Head of caudate nucleus (tissue), 42 donors: ENCODE measurements at regions of chr3 and their contacts with region 1.

Region 1: DNA sequence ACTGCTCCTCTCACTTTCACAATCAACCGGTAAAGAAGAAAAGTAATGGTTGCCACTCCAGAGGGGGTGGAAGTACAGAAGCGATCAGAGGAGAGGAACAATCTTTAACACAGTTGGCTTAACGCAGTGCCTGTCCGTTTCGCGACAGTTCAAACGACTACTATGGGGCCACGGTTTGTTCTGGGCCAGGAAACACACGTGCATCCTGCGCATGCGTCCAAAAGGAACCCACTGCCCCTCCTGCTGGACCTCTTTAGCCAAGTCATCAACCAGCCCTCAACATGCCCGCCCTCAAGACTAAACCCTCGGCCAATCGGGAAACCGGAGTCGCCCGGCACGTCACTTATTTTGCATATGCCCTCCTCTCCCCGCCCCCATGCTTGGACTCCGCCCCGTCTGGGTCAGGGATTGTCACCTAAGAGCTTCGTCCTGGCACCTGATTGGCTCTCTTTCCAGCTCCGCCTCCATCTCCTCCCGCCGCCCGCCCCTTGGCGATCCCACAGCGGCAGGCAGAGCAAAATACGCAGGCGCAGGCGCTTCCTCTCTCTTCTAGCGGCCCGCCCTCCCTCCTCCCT is 345 bp upstream of the CDV3 start:
- DNase-seq: peak; percentile 99 to 100 (median 100)

Region 2: DNA sequence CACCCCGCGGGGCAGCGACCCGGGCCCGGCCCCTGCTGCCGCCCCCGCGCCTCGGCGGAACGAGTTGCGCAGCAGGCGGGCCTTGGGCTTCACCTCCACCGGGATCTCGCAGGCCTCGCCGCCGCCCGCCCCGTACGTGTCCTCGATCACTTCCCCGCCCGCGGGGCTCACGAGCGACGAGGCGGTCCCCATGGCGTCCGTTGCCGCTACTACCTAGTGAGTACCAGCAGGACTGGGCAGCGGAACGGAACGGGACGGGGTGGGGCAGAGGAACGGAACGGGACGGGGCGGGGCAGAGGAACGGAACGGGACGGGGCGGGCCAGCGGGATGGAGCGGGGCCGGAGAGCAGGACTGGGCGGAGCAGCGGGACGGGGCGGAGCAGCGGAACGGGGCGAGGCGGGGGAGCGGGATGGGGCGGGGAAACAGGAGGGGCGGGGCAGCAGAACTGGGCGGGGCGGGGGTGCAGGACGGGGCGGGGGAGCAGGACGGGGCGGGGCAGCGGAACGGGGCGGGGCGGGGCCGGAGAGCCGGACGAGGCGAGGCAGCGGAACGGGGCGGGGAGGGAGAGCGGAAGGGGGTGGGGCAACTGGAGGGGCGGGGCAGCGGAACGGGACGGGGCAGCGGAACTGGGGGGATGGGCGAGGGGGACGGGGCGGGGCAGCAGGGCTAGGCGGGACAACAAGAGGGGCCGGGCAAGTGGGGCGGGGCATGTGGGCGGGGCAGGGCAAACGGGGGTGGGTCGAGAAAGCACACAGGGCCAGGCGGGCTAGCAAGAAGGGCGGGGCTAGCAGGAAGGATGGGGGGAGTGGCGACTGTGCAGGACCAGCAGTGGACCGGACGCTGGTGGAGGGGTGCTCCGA is 850.7 kb before region 1 on chr3 and contains the start of gene NPHP3:
- intact Hi-C with region 1: loop called (anchors 2 kb)
- DNase-seq: peak; percentile 88 to 100 (median 98)

Region 3: DNA sequence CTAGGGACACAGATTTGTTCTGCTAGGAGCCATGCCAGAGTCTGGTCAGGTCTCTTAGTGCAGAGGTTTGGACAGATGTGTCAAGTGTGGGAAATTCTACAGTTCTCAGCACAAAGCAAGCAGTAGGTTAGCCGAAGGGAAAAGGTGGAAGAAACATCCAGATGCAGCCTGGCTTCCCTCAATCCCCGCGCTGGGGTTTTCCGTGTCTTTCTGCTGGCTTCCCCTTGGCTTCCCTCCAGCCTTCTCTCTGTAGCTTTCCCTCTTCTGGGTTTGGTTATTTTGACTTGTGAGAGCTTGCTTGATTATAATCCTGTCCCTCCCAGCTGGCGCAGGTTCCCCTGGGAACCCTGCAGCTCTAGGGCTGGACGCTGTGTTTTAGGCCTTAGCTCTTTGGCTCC is 177.1 kb after region 1 on chr3:
- intact Hi-C with region 1: no loop called
- DNase-seq: peak in 2 of 42 donors; percentile 24 to 46

Region 4: GRCh38 chr3:134485718-134486576 is 912.8 kb after region 1 on chr3 and contains the starts of genes ANAPC13 and CEP63:
- intact Hi-C with region 1: loop called (anchors 5 kb)
- DNase-seq: peak; percentile 86 to 97 (median 92)